IMR-90 (cell line): ENCODE measurements at regions of chr4 and their contacts with region 1.

Region 1: GRCh38 chr4:60683973-60684372 is 516.2 kb upstream of the ADGRL3 start:
- DNase-seq: peak; percentile 94
- ATAC-seq: peak; percentile 81
- H3K4me3 ChIP-seq: no peak overlapping the region
- H3K27ac ChIP-seq: peak overlapping the region; percentile 73; the same call in 1 of the 2 replicates
- H3K4me1 ChIP-seq: no peaks in the 10 kb centered on the region; the same call in none of the 2 replicates
- H3K27me3 ChIP-seq: no peaks in the 10 kb centered on the region
- CTCF ChIP-seq: no peak
- POLR2A ChIP-seq: no peak
- RAD21 ChIP-seq: no peak

Region 2: DNA sequence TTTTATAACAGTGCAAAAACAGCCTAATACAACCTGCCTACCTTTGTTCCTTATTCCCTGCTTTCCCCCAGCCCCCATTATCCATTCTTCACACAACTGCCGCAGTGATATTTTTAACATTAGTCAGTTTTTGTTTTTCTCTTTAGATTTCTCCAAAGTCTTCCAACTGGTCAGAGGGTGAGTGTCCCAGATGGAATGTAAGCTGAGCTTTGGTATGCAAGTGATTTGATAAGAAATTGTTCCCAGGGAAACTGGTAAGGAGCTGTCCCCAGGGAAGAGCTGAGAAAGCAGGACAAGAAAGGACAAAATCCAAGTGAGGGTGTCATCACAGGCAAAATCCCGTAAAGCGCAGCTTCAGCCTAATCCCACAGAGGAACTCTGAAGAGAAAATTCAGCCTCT is 40.6 kb after region 1 on chr4:
- CTCF ChIA-PET with region 1: no interaction called
- POLR2A ChIA-PET with region 1: no interaction called
- dilution Hi-C with region 1: no loop called
- in situ Hi-C with region 1: no loop called
- intact Hi-C with region 1: loop called (anchors 2 kb)
- DNase-seq: peak; percentile 95
- ATAC-seq: peak; percentile 92
- H3K4me3 ChIP-seq: no peak overlapping the region
- H3K27ac ChIP-seq: peak overlapping the region; percentile 99
- H3K4me1 ChIP-seq: peaks cover 16% of the 10 kb centered on the region
- H3K27me3 ChIP-seq: no peaks in the 10 kb centered on the region
- CTCF ChIP-seq: no peak
- POLR2A ChIP-seq: no peak
- RAD21 ChIP-seq: peak; percentile 6